ENCODE measurements at regions of chr4 and their contacts with region 1.

Region 1: DNA sequence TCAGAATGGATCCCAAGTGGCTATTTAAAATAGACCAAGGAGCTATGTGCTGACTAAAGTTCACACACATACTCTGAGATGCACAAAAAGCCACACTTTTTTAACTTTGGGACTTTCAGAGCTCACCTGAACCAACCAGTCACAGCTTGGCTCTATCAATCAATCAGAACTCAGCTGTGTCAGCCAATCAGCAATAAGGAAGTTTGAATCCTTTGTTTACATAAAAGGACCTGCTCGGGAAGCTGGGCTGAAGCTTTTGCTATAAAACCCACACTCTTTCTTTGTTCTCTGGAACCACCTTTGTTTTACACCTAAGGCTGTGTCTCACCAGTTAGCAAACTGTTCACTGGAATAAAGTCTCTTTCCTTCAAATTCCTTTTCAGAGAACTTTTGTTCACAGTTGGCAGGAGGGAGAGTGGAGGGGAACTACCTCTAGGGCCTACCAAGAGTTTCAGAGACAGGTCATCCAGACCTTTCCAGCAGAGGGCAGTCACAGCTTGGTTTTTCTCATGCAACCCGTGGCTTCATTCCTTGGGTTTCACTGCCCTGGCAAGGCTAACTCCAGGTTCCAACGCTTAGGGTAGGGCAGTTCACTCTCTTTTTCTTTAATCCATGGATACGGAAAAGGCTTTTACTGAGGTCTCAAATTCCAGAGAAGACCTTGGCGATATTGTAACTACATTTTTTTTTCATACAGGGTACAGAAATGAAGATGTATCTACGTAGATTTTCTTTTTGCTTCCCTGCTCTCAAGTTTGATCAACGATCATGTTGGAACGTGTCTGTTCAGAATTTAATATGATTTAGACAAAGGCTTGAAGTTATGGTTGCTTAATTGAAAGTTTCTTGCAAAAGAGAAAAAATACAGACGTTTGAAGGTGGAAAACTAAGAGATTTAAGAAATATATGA is 80.7 kb downstream of the GPRIN3 start:
- DNase-seq: peak; percentile 90
- H3K4me3 Mint-ChIP-seq: peak overlapping the region; percentile 58
- H3K27ac Mint-ChIP-seq: no peak overlapping the region
- H3K4me1 Mint-ChIP-seq: peaks cover 11% of the 10 kb centered on the region
- H3K27me3 Mint-ChIP-seq: no peaks in the 10 kb centered on the region

Region 2: DNA sequence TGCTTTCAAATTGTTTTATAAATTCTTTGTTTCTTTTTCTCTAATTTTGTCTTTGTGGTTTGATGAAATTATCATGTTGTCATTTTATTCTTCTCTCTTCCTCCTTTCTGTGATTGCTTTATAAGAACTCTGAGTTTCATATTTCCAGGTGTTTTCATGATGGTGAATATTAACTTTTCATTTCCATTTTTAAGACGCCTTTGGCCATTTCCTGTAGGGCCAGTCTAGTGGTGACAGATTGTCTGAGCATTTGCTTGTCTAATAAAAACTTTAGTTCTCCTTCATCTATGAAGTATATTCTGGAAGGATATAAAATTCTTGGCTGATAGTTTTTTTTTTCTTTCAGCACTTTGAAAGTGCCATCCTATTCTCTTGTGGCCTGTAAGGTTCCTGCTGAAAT is 298.1 kb before region 1 on chr4:
- CTCF ChIA-PET with region 1: no interaction called
- intact Hi-C with region 1: no loop called
- DNase-seq: no peak
- H3K4me3 Mint-ChIP-seq: no peak overlapping the region
- H3K27ac Mint-ChIP-seq: no peak overlapping the region
- H3K4me1 Mint-ChIP-seq: peaks cover 44% of the 10 kb centered on the region
- H3K27me3 Mint-ChIP-seq: no peaks in the 10 kb centered on the region

Region 3: GRCh38 chr4:89110986-89111832 is 115.7 kb before region 1 on chr4 and contains the start of gene TIGD2:
- CTCF ChIA-PET with region 1: no interaction called
- intact Hi-C with region 1: no loop called
- DNase-seq: peak; percentile 81
- H3K4me3 Mint-ChIP-seq: peak within 1 kb of the TSS; percentile 76
- H3K27ac Mint-ChIP-seq: no peak within 1 kb of the TSS
- H3K4me1 Mint-ChIP-seq: peaks cover 11% of the 10 kb centered on the region
- H3K27me3 Mint-ChIP-seq: peaks cover 18% of the 10 kb centered on the region
- total RNA-seq, gene TIGD2: 1.1 to 1.3 TPM

Region 4: GRCh38 chr4:89158884-89159503 is 67.9 kb before region 1 on chr4:
- CTCF ChIA-PET with region 1: interaction called, 7 read pairs
- intact Hi-C with region 1: loop called (anchors 1 kb)
- DNase-seq: no peak
- H3K4me3 Mint-ChIP-seq: no peak overlapping the region
- H3K27ac Mint-ChIP-seq: no peak overlapping the region
- H3K4me1 Mint-ChIP-seq: no peaks in the 10 kb centered on the region
- H3K27me3 Mint-ChIP-seq: peaks cover 4% of the 10 kb centered on the region

Region 5: GRCh38 chr4:89353514-89353913 is 126.6 kb after region 1 on chr4:
- CTCF ChIA-PET with region 1: interaction called, 6 read pairs
- intact Hi-C with region 1: loop called (anchors 1 kb)
- DNase-seq: no peak
- H3K4me3 Mint-ChIP-seq: no peak overlapping the region
- H3K27ac Mint-ChIP-seq: no peak overlapping the region
- H3K4me1 Mint-ChIP-seq: no peaks in the 10 kb centered on the region
- H3K27me3 Mint-ChIP-seq: no peaks in the 10 kb centered on the region

Region 6: DNA sequence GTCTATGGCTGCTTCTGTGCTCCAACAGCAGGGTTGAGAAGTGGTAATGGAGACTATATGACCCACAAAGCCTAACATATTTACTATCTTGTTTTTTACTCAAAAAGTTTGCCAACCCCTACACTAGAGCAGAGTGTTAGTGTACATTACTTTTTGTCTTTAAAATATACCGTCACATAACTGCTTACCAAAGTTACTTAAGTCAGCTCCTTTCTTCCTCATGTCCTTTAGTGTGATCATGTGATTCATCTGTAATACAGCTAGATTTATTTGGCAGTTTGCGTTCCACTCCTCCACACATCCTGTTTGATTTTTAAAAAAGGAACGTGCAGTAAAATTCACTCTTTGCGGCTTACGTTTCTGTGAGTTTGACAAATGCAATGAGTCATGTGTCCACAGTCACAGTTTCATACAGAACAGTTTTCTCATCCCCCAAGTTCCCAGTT is 243.0 kb after region 1 on chr4:
- CTCF ChIA-PET with region 1: interaction called, 4 read pairs
- intact Hi-C with region 1: loop called (anchors 1 kb)
- DNase-seq: peak; percentile 54
- H3K4me3 Mint-ChIP-seq: peak overlapping the region; percentile 2
- H3K27ac Mint-ChIP-seq: peak overlapping the region; percentile 71
- H3K4me1 Mint-ChIP-seq: peaks cover 26% of the 10 kb centered on the region
- H3K27me3 Mint-ChIP-seq: no peaks in the 10 kb centered on the region